K562 (cell line): ENCODE measurements at regions of chr12 and their contacts with region 1.

Region 1: DNA sequence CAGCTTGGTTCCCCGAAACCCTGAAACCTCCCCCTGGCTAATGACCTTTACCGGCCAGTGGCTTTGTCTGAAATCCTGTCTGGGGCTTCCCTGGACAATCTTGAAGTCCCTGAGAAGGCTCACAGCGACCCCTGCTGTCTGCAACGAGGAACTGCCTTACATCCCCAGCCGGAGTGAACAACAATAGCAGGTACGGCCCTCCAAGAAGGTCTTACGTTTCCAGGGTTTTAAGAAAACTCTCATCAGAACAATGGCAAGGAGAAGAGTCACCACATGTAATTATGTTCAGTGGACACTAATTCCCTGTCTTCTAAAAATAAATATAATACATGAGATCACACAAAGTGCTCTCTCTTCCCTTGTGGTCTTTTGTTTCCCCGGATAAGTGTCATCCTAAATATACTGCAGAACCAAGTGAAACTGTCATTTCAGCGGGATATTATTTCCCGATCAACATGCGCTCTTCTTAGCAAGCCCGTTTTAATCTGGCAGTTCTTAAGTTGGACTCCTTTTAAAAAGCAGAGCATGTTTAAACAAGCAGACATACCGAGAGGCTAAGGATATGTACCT is 53.3 kb downstream of the RBM19 start:
- DNase-seq: peak; percentile 79 to 81 (median 80)
- ATAC-seq: peak; percentile 96
- H3K4me3 ChIP-seq: no peak overlapping the region
- H3K27ac ChIP-seq: no peak overlapping the region
- H3K4me1 ChIP-seq: peaks cover 0 to 3% of the 10 kb centered on the region in 2 experiments; a peak in 1 of 5 replicates
- H3K27me3 ChIP-seq: no peaks in the 10 kb centered on the region
- CTCF ChIP-seq: peak; percentile 88 to 93 (median 93)
- EP300 ChIP-seq: no peak
- POLR2A ChIP-seq: no peak
- RAD21 ChIP-seq: peak; percentile 89 to 93

Region 2: DNA sequence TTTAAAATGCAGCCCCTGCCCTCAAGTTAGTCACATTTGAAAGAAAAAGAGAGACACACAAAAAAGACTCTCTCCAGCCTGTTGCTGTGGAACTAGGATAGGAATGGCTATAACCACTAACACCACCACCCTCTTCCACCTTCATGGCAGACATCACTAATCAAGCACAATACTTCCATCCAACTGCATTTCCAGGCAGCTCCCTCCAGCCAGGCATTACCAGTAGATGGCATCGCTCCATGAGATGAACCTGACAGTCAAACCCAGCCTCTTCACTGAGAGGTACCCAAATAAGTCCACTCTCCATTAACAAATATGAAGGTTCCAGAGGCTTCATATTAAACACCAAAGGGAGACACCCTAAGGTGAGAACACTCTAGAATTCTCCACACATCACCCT is 602.4 kb before region 1 on chr12:
- CTCF ChIA-PET with region 1: no interaction called
- POLR2A ChIA-PET with region 1: no interaction called
- in situ Hi-C with region 1: loop called (anchors 10 kb)
- intact Hi-C with region 1: no loop called
- DNase-seq: peak in 1 of 4 experiments; percentile 38
- ATAC-seq: peak; percentile 20; the same call in 2 of the 3 replicates
- H3K4me3 ChIP-seq: no peak overlapping the region
- H3K27ac ChIP-seq: no peak overlapping the region
- H3K4me1 ChIP-seq: peaks cover 10 to 11% of the 10 kb centered on the region in 2 experiments
- H3K27me3 ChIP-seq: no peaks in the 10 kb centered on the region
- CTCF ChIP-seq: no peak
- EP300 ChIP-seq: no peak
- POLR2A ChIP-seq: no peak
- RAD21 ChIP-seq: peak in 1 of 2 experiments; percentile 13; a peak in 1 of 4 replicates

Region 3: GRCh38 chr12:113439606-113440030 is 473.2 kb before region 1 on chr12:
- CTCF ChIA-PET with region 1: interaction called, 9 read pairs
- POLR2A ChIA-PET with region 1: no interaction called
- in situ Hi-C with region 1: loop called (anchors 5 kb)
- intact Hi-C with region 1: loop called (anchors 1 kb)
- DNase-seq: peak; percentile 58 to 77 (median 72)
- ATAC-seq: peak; percentile 86
- H3K4me3 ChIP-seq: no peak overlapping the region
- H3K27ac ChIP-seq: no peak overlapping the region
- H3K4me1 ChIP-seq: peaks cover 5 to 8% of the 10 kb centered on the region in 2 experiments; a peak in 3 of 5 replicates
- H3K27me3 ChIP-seq: peaks cover 6 to 25% of the 10 kb centered on the region in 2 experiments; a peak in 3 of 5 replicates
- CTCF ChIP-seq: peak; percentile 70 to 85 (median 85)
- EP300 ChIP-seq: no peak
- POLR2A ChIP-seq: no peak
- RAD21 ChIP-seq: peak; percentile 62 to 87

Region 4: DNA sequence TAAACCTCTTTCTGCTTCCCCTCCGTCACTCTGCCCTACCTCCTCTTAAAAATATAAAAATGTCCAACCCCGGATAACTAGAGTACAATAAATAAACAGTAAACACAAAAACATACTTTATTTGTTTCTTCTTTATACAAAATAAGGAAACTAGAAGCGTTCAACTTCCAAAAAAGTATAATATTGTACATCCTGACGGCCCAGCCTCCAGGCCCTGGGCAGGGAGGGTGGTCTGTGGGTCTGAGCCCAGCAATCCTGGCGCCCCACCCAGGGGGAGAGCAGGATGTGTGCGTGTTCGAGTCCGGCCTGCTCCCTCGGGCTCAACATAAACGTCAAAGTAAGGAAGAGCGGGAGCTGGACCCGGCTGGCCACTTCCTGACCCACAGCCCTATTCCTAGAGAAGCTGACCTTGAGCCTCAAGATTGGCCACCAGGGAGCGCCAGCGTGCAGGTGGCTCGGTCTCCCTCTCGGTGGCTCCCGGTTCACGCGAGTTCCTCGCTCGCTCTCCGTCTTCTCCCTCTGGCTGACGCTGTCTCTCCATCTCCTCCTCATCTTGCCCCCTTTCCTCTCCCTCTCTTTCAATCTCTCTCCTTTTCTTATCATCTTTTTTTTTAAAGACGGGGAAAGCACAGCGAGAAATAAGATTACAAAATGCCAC is 450.6 kb before region 1 on chr12:
- CTCF ChIA-PET with region 1: interaction called, 19 read pairs
- POLR2A ChIA-PET with region 1: no interaction called
- in situ Hi-C with region 1: no loop called
- intact Hi-C with region 1: loop called (anchors 5 kb)
- DNase-seq: peak; percentile 78 to 90 (median 84)
- ATAC-seq: peak; percentile 94
- H3K4me3 ChIP-seq: no peak overlapping the region
- H3K27ac ChIP-seq: no peak overlapping the region
- H3K4me1 ChIP-seq: peaks cover 0 to 44% of the 10 kb centered on the region in 2 experiments; a peak in 3 of 5 replicates
- H3K27me3 ChIP-seq: peaks cover 30 to 53% of the 10 kb centered on the region in 2 experiments
- CTCF ChIP-seq: peak; percentile 90 to 95 (median 95)
- EP300 ChIP-seq: no peak
- POLR2A ChIP-seq: no peak
- RAD21 ChIP-seq: peak; percentile 73 to 92

Region 5: GRCh38 chr12:113735131-113735530 is 177.7 kb before region 1 on chr12:
- CTCF ChIA-PET with region 1: no interaction called
- POLR2A ChIA-PET with region 1: no interaction called
- in situ Hi-C with region 1: no loop called
- intact Hi-C with region 1: loop called (anchors 10 kb)
- DNase-seq: no peak
- ATAC-seq: no peak
- H3K4me3 ChIP-seq: no peak overlapping the region
- H3K27ac ChIP-seq: no peak overlapping the region
- H3K4me1 ChIP-seq: no peaks in the 10 kb centered on the region
- H3K27me3 ChIP-seq: peaks cover 0 to 9% of the 10 kb centered on the region in 2 experiments; a peak in 2 of 5 replicates
- CTCF ChIP-seq: no peak
- EP300 ChIP-seq: no peak
- POLR2A ChIP-seq: no peak
- RAD21 ChIP-seq: no peak

Region 6: DNA sequence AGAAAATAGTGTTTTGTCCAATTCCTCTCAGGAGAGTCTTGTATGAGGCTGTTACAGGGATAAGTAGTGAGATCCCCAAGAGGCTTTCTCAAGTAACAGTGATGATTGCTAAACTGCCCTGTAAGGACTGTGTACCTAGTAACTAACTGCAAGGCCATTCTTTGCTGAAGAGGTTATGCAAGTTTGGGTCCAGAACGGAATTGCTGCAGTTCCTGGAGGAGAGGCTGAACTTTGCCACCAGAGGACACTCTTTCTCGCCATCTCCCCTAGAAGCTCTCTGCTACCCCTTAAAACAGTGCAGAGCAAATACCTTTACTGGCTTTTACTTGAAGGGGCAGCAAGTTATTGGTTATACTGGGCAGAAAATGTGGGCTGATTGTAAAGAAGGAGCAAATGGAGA is 126.7 kb before region 1 on chr12:
- CTCF ChIA-PET with region 1: no interaction called
- POLR2A ChIA-PET with region 1: no interaction called
- in situ Hi-C with region 1: no loop called
- intact Hi-C with region 1: loop called (anchors 1 kb)
- DNase-seq: no peak
- ATAC-seq: peak; percentile 62
- H3K4me3 ChIP-seq: no peak overlapping the region
- H3K27ac ChIP-seq: no peak overlapping the region
- H3K4me1 ChIP-seq: peaks cover 4 to 7% of the 10 kb centered on the region in 2 experiments; a peak in 3 of 5 replicates
- H3K27me3 ChIP-seq: no peaks in the 10 kb centered on the region
- CTCF ChIP-seq: peak; percentile 26 to 48 (median 34); a peak in 4 of 6 replicates
- EP300 ChIP-seq: no peak
- POLR2A ChIP-seq: no peak
- RAD21 ChIP-seq: peak in 1 of 2 experiments; percentile 29; a peak in 1 of 4 replicates

Region 7: GRCh38 chr12:113837528-113838296 is 75.1 kb before region 1 on chr12:
- CTCF ChIA-PET with region 1: no interaction called
- POLR2A ChIA-PET with region 1: no interaction called
- in situ Hi-C with region 1: no loop called
- intact Hi-C with region 1: no loop called
- DNase-seq: no peak
- ATAC-seq: peak; percentile 60; the same call in 2 of the 3 replicates
- H3K4me3 ChIP-seq: no peak overlapping the region
- H3K27ac ChIP-seq: no peak overlapping the region
- H3K4me1 ChIP-seq: peaks cover 0 to 4% of the 10 kb centered on the region in 2 experiments; a peak in 1 of 5 replicates
- H3K27me3 ChIP-seq: no peaks in the 10 kb centered on the region
- CTCF ChIP-seq: peak in 2 of 3 experiments; percentile 15 to 38; a peak in 2 of 6 replicates
- EP300 ChIP-seq: no peak
- POLR2A ChIP-seq: no peak
- RAD21 ChIP-seq: no peak